Activated T-helper 2 cell treated with anti-CD3 and anti-CD28 coated beads, Interferon-gamma antibody, Interleukin-2, Interleukin-4, amounts not matched to agents 10 μg/mL and 5 μg/mL and 100 μg/mL, durations not matched to agents 14 hours and 24 hours and 36 hours (primary cell): ENCODE measurements at regions of chr21 and their contacts with region 1.

Region 1: GRCh38 chr21:42456457-42456856 is 39.6 kb downstream of the RSPH1 start:
- DNase-seq: peak; percentile 39
- H3K4me3 Mint-ChIP-seq: no peak overlapping the region
- H3K27ac Mint-ChIP-seq: peak overlapping the region; percentile 74
- H3K4me1 Mint-ChIP-seq: peaks cover 33% of the 10 kb centered on the region
- H3K27me3 Mint-ChIP-seq: no peaks in the 10 kb centered on the region

Region 2: DNA sequence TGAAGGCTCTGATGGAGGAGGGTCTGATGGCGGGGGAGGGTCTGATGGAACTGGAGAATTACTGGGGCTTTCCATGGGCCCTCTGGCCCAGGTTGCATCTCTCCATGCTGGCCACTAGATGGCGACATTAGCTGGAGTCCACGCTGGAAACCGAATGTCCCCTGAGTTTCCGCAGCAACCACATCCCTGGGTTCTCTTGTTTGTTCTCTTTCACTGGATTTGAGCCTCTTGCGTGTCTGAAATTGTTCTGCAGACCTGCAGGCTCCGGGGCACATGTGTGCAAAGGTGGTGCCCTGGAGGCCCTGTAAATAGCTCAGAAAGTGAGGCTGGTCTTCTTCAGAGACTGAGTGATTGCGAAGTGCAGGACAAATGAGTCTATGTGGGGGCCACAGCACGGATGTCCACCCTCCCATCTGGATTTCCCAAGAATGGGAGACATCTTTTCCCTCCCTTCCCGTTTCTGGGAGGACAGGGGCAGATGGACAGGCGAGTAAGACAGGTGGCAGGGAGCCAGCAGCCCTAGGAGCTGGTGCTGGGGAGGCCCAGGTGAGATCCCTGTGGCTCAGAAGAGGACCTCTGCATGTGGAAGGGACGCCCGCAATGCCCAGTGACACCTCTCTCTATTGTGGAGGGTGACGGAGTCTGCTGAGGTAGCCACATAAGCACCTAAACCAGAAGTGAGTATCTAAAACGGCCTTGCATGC is 310.7 kb before region 1 on chr21:
- intact Hi-C with region 1: loop called (anchors 10 kb)
- DNase-seq: peak; percentile 58
- H3K4me3 Mint-ChIP-seq: no peak overlapping the region
- H3K27ac Mint-ChIP-seq: no peak overlapping the region
- H3K4me1 Mint-ChIP-seq: peaks cover 6% of the 10 kb centered on the region
- H3K27me3 Mint-ChIP-seq: peaks cover 3% of the 10 kb centered on the region

Region 3: GRCh38 chr21:42496122-42496900 is 39.9 kb after region 1 on chr21 and contains the start of gene RSPH1:
- intact Hi-C with region 1: loop called (anchors 1 kb)
- DNase-seq: peak; percentile 99
- H3K4me3 Mint-ChIP-seq: peak within 1 kb of the TSS; percentile 89
- H3K27ac Mint-ChIP-seq: peak within 1 kb of the TSS; percentile 62
- H3K4me1 Mint-ChIP-seq: peaks cover 24% of the 10 kb centered on the region
- H3K27me3 Mint-ChIP-seq: peaks cover 20% of the 10 kb centered on the region
- total RNA-seq, gene RSPH1: not detected in 2 replicates